ENCODE measurements at regions of chr14 and their contacts with region 1.

Region 1: GRCh38 chr14:28412081-28412480 is 354.5 kb upstream of the FOXG1 start:
- DNase-seq: peak; percentile 6
- H3K4me3 ChIP-seq: no peak overlapping the region
- H3K27ac ChIP-seq: no peak overlapping the region
- H3K4me1 ChIP-seq: no peaks in the 10 kb centered on the region
- H3K27me3 ChIP-seq: no peaks in the 10 kb centered on the region
- CTCF ChIP-seq: peak in 1 of 2 donors; percentile 48

Region 2: GRCh38 chr14:28596391-28596790 is 184.3 kb after region 1 on chr14:
- CTCF ChIA-PET with region 1: no interaction called
- dilution Hi-C with region 1: no loop called
- in situ Hi-C with region 1: loop called in 1 of 2 experiments (anchors 25 kb)
- intact Hi-C with region 1: loop called (anchors 5 kb)
- DNase-seq: peak; percentile 17
- H3K4me3 ChIP-seq: no peak overlapping the region
- H3K27ac ChIP-seq: no peak overlapping the region
- H3K4me1 ChIP-seq: no peaks in the 10 kb centered on the region
- H3K27me3 ChIP-seq: no peaks in the 10 kb centered on the region
- CTCF ChIP-seq: peak; percentile 40 to 66

Region 3: GRCh38 chr14:28608851-28609828 is 197.1 kb after region 1 on chr14:
- CTCF ChIA-PET with region 1: interaction called, 4 read pairs
- dilution Hi-C with region 1: no loop called
- in situ Hi-C with region 1: no loop called
- intact Hi-C with region 1: loop called (anchors 1 kb)
- DNase-seq: peak; percentile 37
- H3K4me3 ChIP-seq: no peak overlapping the region
- H3K27ac ChIP-seq: no peak overlapping the region
- H3K4me1 ChIP-seq: no peaks in the 10 kb centered on the region
- H3K27me3 ChIP-seq: no peaks in the 10 kb centered on the region
- CTCF ChIP-seq: peak; percentile 91

Measured in mammary epithelial cell (primary cell).